ENCODE measurements at regions of chr3 and their contacts with region 1.

Region 1: GRCh38 chr3:81279481-81280273 is 481.8 kb downstream of the GBE1 start:
- DNase-seq: no peak
- ATAC-seq: no peak
- H3K4me3 ChIP-seq: no peak overlapping the region
- H3K27ac ChIP-seq: no peak overlapping the region
- H3K4me1 ChIP-seq: no peaks in the 10 kb centered on the region
- H3K27me3 ChIP-seq: no peaks in the 10 kb centered on the region
- CTCF ChIP-seq: no peak
- POLR2A ChIP-seq: no peak
- RAD21 ChIP-seq: no peak

Region 2: DNA sequence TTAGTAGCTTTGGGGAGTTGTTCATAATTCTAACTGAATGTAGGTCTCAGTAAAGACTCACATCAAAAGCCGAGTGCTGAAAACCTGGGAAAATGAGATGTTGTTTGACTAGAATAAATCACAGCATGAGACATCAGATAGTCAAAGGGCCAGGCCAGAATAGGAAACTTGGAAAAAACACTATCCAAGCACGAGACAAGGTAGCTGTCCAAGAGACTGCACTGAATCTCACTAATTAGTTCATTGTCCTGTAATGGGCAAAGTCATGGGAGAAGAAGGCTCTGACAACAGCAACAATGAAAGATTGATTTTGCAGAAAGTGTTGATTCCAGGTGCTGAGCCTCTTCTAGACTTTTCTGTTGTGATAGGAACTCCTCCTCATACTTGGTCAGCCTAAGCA is 1826.1 kb before region 1 on chr3:
- CTCF ChIA-PET with region 1: no interaction called
- POLR2A ChIA-PET with region 1: no interaction called
- RAD21 ChIA-PET with region 1: no interaction called
- intact Hi-C with region 1: loop called (anchors 5 kb)
- DNase-seq: no peak
- ATAC-seq: no peak
- H3K4me3 ChIP-seq: no peak overlapping the region
- H3K27ac ChIP-seq: no peak overlapping the region
- H3K4me1 ChIP-seq: no peaks in the 10 kb centered on the region
- H3K27me3 ChIP-seq: no peaks in the 10 kb centered on the region
- CTCF ChIP-seq: no peak
- POLR2A ChIP-seq: no peak
- RAD21 ChIP-seq: no peak